ENCODE measurements at regions of chr17 and their contacts with region 1.

Region 1: GRCh38 chr17:36148559-36149295 is 27.7 kb downstream of the TBC1D3B start:
- DNase-seq: peak; percentile 73
- ATAC-seq: peak; percentile 93
- H3K4me3 ChIP-seq: no peak overlapping the region
- H3K27ac ChIP-seq: no peak overlapping the region
- H3K4me1 ChIP-seq: peaks cover 4% of the 10 kb centered on the region
- H3K27me3 ChIP-seq: no peaks in the 10 kb centered on the region
- CTCF ChIP-seq: peak; percentile 98

Region 2: GRCh38 chr17:35969558-35970380 is 179.0 kb before region 1 on chr17:
- intact Hi-C with region 1: loop called (anchors 10 kb)
- DNase-seq: peak; percentile 59
- ATAC-seq: peak; percentile 77 to 88
- H3K4me3 ChIP-seq: no peak overlapping the region
- H3K27ac ChIP-seq: no peak overlapping the region
- H3K4me1 ChIP-seq: peaks cover 15% of the 10 kb centered on the region
- H3K27me3 ChIP-seq: no peaks in the 10 kb centered on the region
- CTCF ChIP-seq: peak; percentile 86

Measured in lower lobe of right lung (tissue), 2 donors.